A549 (cell line): ENCODE measurements at regions of chr3 and their contacts with region 1.

Region 1: GRCh38 chr3:128398586-128398985 is 68.1 kb downstream of the DNAJB8 start:
- DNase-seq: no peak
- ATAC-seq: no peak; a peak in 1 of 6 replicates
- H3K4me3 ChIP-seq: no peak overlapping the region
- H3K27ac ChIP-seq: no peak overlapping the region
- H3K4me1 ChIP-seq: no peaks in the 10 kb centered on the region
- CTCF ChIP-seq: no peak
- EP300 ChIP-seq: no peak
- POLR2A ChIP-seq: no peak
- RAD21 ChIP-seq: no peak

Region 2: DNA sequence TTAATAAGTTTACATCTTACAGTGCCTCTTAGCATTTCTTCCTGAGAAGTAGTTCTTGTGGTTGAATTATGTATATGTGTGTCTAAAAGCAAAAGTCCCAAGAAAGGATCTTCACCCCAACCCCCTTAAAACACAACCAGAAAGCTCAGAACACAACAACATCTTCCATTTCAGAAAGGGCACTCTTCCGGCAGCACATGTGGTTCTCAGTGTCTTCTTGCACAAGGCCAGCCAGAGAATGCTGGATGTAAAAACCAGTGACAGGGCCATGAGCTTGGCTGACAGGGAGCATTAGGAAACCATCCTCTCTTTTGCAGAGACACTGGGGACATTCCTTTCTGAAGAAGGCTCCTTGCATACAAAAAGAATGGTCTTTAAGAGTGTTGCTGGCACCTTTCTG is 200.3 kb before region 1 on chr3:
- CTCF ChIA-PET with region 1: no interaction called
- POLR2A ChIA-PET with region 1: no interaction called
- DNase-seq: no peak
- ATAC-seq: no peak
- H3K4me3 ChIP-seq: no peak overlapping the region
- H3K27ac ChIP-seq: no peak overlapping the region
- H3K4me1 ChIP-seq: no peaks in the 10 kb centered on the region
- CTCF ChIP-seq: no peak
- EP300 ChIP-seq: no peak
- POLR2A ChIP-seq: no peak
- RAD21 ChIP-seq: no peak

Region 3: GRCh38 chr3:128415773-128416577 is 17.4 kb after region 1 on chr3:
- CTCF ChIA-PET with region 1: interaction called, 10 read pairs
- POLR2A ChIA-PET with region 1: no interaction called
- DNase-seq: no peak
- ATAC-seq: peak in 1 of 2 experiments; percentile 13; a peak in 2 of 6 replicates
- H3K4me3 ChIP-seq: no peak overlapping the region
- H3K27ac ChIP-seq: peak overlapping the region; percentile 68 to 86
- H3K4me1 ChIP-seq: peaks cover 25% of the 10 kb centered on the region
- CTCF ChIP-seq: no peak
- EP300 ChIP-seq: no peak
- POLR2A ChIP-seq: no peak
- RAD21 ChIP-seq: no peak